PC-9 (cell line): ENCODE measurements at regions of chr5 and their contacts with region 1.

Region 1: DNA sequence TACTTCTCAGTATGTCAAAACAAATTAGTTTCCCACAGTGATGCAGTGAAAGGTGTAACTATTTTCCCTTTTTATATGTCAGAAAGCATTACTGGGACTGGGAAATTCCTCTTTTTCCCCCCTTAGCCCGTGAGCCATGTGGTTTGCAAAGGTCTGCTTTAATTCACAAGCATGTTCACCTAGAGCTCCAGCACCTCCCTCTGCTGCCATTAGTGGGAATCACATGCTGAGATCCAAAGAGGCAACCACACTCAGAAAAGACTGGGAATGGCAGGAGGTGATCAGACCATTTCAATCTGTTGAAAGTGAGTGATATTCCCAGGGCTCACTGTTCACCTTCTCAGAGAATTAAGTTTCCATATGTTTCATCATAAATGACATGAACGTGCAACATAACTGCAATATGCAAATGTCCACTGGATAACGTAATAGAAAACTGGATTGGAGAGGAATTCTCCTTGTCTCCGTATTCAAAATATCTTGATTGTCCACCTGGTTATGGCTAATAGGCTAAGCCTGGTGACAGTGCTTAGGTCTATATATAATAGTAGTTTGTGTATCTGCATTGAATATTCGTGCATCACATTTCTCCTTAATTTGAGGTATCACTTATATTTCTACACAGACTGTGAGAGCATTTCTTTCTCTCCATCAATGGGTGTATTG is 703.5 kb upstream of the WWC1 start:
- DNase-seq: peak in 1 of 2 experiments; percentile 17
- H3K4me3 ChIP-seq: no peak overlapping the region
- H3K27ac ChIP-seq: no peak overlapping the region
- H3K4me1 ChIP-seq: no peaks in the 10 kb centered on the region
- H3K27me3 ChIP-seq: no peaks in the 10 kb centered on the region
- CTCF ChIP-seq: peak; percentile 60

Region 2: GRCh38 chr5:166898166-166898565 is 689.7 kb before region 1 on chr5:
- CTCF ChIA-PET with region 1: no interaction called
- POLR2A ChIA-PET with region 1: no interaction called
- intact Hi-C with region 1: no loop called
- DNase-seq: no peak
- H3K4me3 ChIP-seq: no peak overlapping the region
- H3K27ac ChIP-seq: no peak overlapping the region
- H3K4me1 ChIP-seq: no peaks in the 10 kb centered on the region
- H3K27me3 ChIP-seq: peaks cover 23% of the 10 kb centered on the region
- CTCF ChIP-seq: no peak

Region 3: DNA sequence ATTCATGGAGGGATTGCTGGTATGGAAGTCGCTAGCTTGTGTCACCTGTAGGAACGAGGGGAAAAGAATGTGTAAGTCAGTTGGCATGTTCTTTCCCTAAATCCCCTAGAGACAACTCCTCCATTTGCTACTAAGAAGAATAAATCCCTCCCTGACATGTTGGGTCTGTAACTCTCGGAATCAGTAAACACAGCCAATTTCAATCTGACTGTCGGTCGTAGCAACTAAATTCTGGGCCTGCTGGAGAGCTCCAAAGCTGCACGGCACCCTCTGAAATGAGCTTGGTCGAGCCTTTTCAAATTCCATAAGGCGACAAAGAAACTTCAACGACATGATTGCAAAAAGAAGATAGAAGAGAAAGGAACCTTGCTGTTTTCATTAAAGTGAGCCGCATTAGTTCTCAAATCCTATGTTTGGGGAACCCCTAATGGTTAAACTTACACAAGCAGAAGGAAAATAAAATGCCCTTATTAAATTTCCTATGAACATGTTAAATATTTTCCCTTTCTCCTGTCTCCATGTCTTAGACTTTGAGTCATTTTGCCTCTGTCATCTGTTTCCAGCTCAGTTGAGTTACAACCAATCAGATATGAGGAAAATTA is 32.2 kb before region 1 on chr5:
- CTCF ChIA-PET with region 1: no interaction called
- POLR2A ChIA-PET with region 1: no interaction called
- intact Hi-C with region 1: no loop called
- DNase-seq: no peak
- H3K4me3 ChIP-seq: no peak overlapping the region
- H3K27ac ChIP-seq: no peak overlapping the region
- H3K4me1 ChIP-seq: no peaks in the 10 kb centered on the region
- H3K27me3 ChIP-seq: peaks cover 30% of the 10 kb centered on the region
- CTCF ChIP-seq: no peak

Region 4: DNA sequence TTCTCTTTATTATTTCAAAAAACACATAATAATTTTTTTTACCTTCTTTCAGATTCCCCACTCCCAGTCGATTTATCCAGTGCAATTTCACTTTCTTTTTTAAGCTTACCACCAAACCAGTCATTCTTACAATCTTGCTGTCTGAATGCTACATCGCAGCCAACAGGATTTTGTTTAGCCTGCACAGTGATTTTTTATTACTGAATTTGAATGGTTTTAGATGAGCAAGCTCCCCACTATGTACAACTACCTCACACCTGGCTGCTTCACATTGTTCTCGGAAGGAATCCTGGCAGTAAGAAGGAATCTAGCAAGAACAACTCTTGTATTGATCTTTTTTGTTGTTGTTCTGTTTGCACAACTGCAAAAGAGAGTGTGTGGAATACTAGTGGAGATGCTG is 35.4 kb after region 1 on chr5:
- CTCF ChIA-PET with region 1: no interaction called
- POLR2A ChIA-PET with region 1: no interaction called
- intact Hi-C with region 1: no loop called
- DNase-seq: no peak
- H3K4me3 ChIP-seq: no peak overlapping the region
- H3K27ac ChIP-seq: no peak overlapping the region
- H3K4me1 ChIP-seq: no peaks in the 10 kb centered on the region
- H3K27me3 ChIP-seq: no peaks in the 10 kb centered on the region
- CTCF ChIP-seq: no peak

Region 5: GRCh38 chr5:167723254-167723871 is 135.5 kb after region 1 on chr5:
- CTCF ChIA-PET with region 1: no interaction called
- POLR2A ChIA-PET with region 1: no interaction called
- intact Hi-C with region 1: loop called (anchors 5 kb)
- DNase-seq: peak; percentile 66 to 70
- H3K4me3 ChIP-seq: no peak overlapping the region
- H3K27ac ChIP-seq: no peak overlapping the region
- H3K4me1 ChIP-seq: 0 out of 2 replicates have a peak, but pooled peaks cover 5% of the 10 kb centered on the region
- H3K27me3 ChIP-seq: no peaks in the 10 kb centered on the region
- CTCF ChIP-seq: peak; percentile 93

Region 6: GRCh38 chr5:167814828-167815227 is 226.9 kb after region 1 on chr5:
- CTCF ChIA-PET with region 1: no interaction called
- POLR2A ChIA-PET with region 1: no interaction called
- intact Hi-C with region 1: loop called (anchors 5 kb)
- DNase-seq: peak; percentile 2 to 51
- H3K4me3 ChIP-seq: no peak overlapping the region
- H3K27ac ChIP-seq: no peak overlapping the region
- H3K4me1 ChIP-seq: peaks cover 9% of the 10 kb centered on the region
- H3K27me3 ChIP-seq: no peaks in the 10 kb centered on the region
- CTCF ChIP-seq: no peak